ENCODE measurements at regions of chr1 and their contacts with region 1.

Region 1: GRCh38 chr1:20696397-20697329 is 21.1 kb downstream of the KIF17 start:
- DNase-seq: peak; percentile 80 to 96
- H3K4me3 ChIP-seq: peak overlapping the region; percentile 56 to 69 (median 60)
- H3K27ac ChIP-seq: peak overlapping the region; percentile 37 to 86 (median 79)
- H3K4me1 ChIP-seq: peaks cover 0 to 16% (median 13%) of the 10 kb centered on the region in 4 donors
- H3K27me3 ChIP-seq: no peaks in the 10 kb centered on the region
- CTCF ChIP-seq: peak in 5 of 7 experiments; percentile 71 to 94 (median 77)
- EP300 ChIP-seq: no peak
- POLR2A ChIP-seq: no peak

Region 2: DNA sequence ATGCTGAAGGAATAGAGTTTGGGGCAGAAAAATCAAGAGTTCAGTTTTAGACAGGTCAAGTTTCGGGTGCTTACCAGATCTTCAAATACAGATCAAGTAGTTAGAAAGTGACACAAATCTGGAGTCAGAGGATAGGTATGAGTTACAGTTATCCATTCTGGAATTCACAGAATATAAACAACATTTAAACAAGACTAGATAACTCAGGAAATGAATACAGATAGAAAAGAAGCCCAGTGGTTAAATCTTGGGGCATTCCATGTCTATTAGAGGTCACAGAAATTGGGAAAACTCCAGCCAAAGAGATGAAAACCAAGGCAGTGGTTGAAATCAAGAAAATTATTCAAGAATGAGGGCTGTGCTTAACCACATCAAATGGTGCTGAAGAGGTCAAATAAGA is 277.4 kb after region 1 on chr1:
- intact Hi-C with region 1: loop called (anchors 10 kb)
- DNase-seq: no peak
- H3K4me3 ChIP-seq: no peak overlapping the region
- H3K27ac ChIP-seq: no peak overlapping the region
- H3K4me1 ChIP-seq: no peaks in the 10 kb centered on the region
- H3K27me3 ChIP-seq: no peaks in the 10 kb centered on the region
- CTCF ChIP-seq: no peak
- EP300 ChIP-seq: no peak
- POLR2A ChIP-seq: no peak

Region 3: GRCh38 chr1:21189906-21190500 is 493.3 kb after region 1 on chr1:
- intact Hi-C with region 1: loop called (anchors 10 kb)
- DNase-seq: peak in 1 of 2 donors; percentile 40
- H3K4me3 ChIP-seq: no peak overlapping the region
- H3K27ac ChIP-seq: peak overlapping the region in 1 of 5 donors; percentile 65
- H3K4me1 ChIP-seq: peaks cover 0 to 27% (median 6%) of the 10 kb centered on the region in 4 donors
- H3K27me3 ChIP-seq: no peaks in the 10 kb centered on the region
- CTCF ChIP-seq: no peak
- EP300 ChIP-seq: no peak
- POLR2A ChIP-seq: no peak

Measured in stomach (tissue), 19 donors.